Psoas muscle (tissue), 8 donors: ENCODE measurements at regions of chr19 and their contacts with region 1.

Region 1: GRCh38 chr19:17069218-17069617 is 6.0 kb downstream of the HAUS8 start:
- DNase-seq: no peak
- ATAC-seq: no peak
- H3K4me3 ChIP-seq: no peak overlapping the region
- H3K27ac ChIP-seq: no peak overlapping the region
- H3K4me1 ChIP-seq: peaks cover 4% of the 10 kb centered on the region
- H3K27me3 ChIP-seq: no peaks in the 10 kb centered on the region
- CTCF ChIP-seq: no peak

Region 2: DNA sequence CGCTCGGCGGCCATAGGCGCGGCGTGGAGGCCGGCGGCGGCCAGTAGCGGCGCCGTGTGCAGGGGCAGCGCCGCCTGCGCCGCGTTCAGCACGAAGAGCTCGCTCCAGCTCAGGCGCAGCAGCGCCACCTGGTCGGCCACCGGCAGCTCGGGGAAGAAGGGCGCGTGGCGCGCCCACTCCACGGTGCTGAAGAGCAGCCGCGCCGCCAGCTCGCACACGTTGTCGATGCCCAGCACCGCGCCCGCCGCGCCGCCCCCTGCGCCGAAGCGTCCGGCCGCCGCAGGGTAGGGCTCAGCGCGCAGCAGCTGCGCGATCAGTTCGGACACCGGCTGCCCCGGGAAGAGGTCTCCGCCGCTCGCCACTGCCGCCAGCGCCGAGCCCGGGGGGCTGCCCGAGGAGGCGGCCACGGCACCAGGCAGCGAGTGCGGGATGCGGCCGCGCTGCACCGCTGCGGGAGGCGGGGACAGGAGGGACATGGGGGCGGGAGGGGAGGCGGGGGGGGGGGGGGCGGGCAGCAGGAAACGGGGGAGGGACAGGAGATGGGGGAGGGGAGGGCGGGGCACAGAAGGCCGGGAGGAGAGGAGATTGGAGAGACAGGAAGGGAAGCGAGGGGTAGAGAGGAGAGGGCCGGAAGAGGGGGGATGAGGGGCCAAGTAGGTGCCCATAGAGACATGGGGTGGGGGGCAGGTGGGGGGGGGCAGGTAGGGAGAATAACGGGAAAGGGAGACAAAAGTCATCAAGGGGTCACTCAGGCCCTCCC is 166.6 kb after region 1 on chr19:
- intact Hi-C with region 1: loop called in 1 of 2 experiments (anchors 2 kb)
- DNase-seq: peak; percentile 74 to 86
- ATAC-seq: peak; percentile 82 to 93 (median 88)
- H3K4me3 ChIP-seq: peak overlapping the region; percentile 72
- H3K27ac ChIP-seq: peak overlapping the region; percentile 67
- H3K4me1 ChIP-seq: peaks cover 16% of the 10 kb centered on the region
- H3K27me3 ChIP-seq: no peaks in the 10 kb centered on the region
- CTCF ChIP-seq: peak; percentile 52

Region 3: DNA sequence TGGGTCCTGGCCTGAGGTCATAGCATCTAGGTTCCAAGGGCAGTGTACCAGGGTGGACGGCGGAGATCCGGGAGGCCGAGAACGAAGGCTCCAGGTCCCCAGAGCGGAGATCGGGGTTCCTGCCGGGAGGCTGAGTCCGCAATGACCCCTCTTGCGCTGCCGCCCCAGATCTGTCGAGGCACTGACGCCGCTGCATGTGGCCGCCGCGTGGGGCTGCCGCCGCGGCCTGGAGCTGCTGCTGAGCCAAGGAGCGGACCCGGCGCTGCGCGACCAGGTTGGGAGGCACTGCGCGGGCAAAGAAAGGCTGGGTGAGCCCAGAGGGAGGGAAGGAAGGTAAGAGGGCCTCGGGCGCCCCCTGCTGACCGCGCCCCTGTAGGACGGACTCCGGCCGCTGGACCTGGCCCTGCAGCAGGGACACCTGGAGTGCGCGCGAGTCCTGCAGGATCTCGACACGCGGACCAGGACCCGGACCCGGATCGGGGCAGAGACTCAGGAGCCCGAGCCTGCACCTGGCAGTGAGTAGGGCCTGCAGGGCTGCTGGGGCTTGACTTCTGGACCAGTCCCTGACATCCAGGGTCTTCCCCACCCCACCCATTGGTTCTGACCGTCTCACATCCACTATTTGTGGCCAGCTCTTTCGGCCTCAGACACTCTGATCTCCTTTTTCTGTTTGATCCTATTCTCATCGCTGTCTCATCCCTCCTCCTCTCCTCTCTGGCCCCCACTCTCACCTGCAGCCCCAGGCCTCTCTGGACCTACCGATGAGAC is 213.5 kb after region 1 on chr19:
- intact Hi-C with region 1: loop called (anchors 1 to 2 kb)
- DNase-seq: peak; percentile 83 to 91
- ATAC-seq: peak; percentile 89 to 98 (median 96)
- H3K4me3 ChIP-seq: peak overlapping the region; percentile 51
- H3K27ac ChIP-seq: no peak overlapping the region
- H3K4me1 ChIP-seq: peaks cover 4% of the 10 kb centered on the region
- H3K27me3 ChIP-seq: peaks cover 0 to 16% (median 7%) of the 10 kb centered on the region in 3 donors
- CTCF ChIP-seq: peak; percentile 91